Natural killer cell (primary cell): ENCODE measurements at regions of chr12 and their contacts with region 1.

Region 1: DNA sequence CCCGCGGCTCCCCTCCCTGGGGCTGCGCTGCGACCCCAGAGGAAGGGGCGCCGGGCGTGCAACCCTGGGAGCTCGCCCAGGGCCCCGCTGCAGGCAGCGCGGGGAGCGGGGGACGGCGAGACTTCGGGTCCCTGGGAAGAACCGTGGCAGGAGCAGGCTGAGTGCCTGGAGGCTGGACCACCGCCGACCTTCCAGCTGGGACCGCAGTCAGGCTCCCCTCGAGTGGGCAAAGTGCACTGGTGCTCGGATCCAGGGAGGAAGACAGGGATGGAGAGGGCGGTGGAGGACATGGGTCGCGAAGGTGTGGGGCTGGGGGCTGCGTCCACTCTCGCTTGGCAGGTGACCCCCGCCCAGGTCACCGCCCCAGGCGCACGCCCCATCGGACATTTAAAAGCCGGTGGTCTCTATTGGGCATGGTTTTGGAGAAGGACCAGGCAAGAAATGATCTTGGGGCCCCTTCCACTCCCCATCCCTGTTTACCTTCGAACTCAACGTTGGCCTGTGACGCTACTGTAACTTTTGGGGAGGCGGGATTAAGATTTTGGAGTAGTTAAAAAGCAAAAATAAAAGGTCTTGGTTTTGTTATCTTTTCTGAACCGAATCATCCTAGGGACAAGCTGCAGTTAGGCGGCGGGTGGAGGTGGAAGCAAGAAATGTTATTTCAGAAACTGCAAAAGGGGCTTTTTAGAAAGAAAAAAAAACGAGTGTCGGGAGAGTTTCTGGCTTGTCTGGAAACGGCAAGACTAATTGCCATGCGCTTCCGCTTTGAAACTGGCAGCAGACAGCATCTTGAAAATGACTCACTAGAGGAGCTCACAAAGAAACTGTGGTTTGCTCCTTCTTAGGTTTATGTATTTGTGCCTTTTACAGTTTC is 1.0 kb downstream of the ELK3 start:
- DNase-seq: peak; percentile 53 to 91
- ATAC-seq: peak; percentile 60 to 76 (median 71)
- H3K4me3 ChIP-seq: peak overlapping the region; percentile 78
- H3K4me3 Mint-ChIP-seq: peak overlapping the region; percentile 99
- H3K27ac ChIP-seq: peak overlapping the region; percentile 81
- H3K27ac Mint-ChIP-seq: peak overlapping the region; percentile 97
- H3K4me1 ChIP-seq: peaks cover 21% of the 10 kb centered on the region
- H3K4me1 Mint-ChIP-seq: peaks cover 30 to 41% of the 10 kb centered on the region in 2 donors
- H3K27me3 ChIP-seq: no peaks in the 10 kb centered on the region
- H3K27me3 Mint-ChIP-seq: no peaks in the 10 kb centered on the region
- CTCF ChIP-seq: no peak

Region 2: DNA sequence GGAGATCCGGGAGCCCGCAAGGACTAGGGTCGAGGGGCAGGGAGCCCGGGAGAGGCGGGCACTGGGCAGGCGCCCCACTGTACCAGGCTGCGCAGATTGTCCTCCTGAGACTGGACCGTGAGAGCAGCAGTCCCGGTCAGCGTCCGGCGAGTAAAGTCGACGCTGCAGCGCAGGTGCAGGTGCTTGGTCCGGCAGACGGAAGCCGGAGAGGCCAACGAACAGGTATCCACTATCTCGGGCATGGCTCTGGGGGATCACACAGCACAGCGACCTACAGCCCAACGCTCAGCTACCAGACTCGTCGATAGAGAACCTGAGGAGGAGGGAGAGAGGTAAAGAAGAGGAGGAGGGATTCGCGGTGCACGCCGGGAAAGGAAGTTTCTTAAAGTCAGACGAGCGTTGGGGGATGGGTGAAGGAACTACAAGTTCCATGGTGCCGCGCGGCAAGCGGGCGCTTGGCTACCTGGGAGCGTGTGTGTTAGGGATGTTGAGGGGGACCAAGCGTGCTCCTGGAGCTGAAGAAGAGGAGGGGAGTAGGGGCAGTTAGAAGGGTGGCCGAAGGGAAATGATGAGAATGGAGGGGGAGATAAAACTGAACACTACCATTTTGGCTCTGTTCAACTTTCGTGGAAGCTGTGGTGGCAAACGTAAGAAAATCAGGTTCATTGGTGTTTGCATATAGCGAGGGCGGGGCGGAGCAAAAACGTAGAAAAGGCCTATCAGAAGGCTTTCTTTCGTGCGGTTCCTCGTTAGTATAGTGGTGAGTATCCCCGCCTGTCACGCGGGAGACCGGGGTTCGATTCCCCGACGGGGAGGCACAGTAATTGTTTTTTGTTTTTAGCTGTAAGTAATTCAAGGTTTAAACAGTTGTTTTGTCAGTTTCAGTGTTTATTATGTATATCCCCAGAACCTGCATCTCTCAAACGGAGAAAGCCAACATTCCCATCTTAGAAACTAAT is 159.7 kb before region 1 on chr12 and contains the start of gene LTA4H:
- intact Hi-C with region 1: loop called (anchors 1 kb)
- DNase-seq: peak; percentile 93 to 99
- ATAC-seq: peak; percentile 94 to 99 (median 95)
- H3K4me3 ChIP-seq: peak within 1 kb of the TSS; percentile 97
- H3K4me3 Mint-ChIP-seq: no peak within 1 kb of the TSS
- H3K27ac ChIP-seq: peak within 1 kb of the TSS; percentile 78
- H3K27ac Mint-ChIP-seq: no peak within 1 kb of the TSS
- H3K4me1 ChIP-seq: peaks cover 8% of the 10 kb centered on the region
- H3K4me1 Mint-ChIP-seq: peaks cover 0 to 14% of the 10 kb centered on the region in 2 donors
- H3K27me3 ChIP-seq: no peaks in the 10 kb centered on the region
- H3K27me3 Mint-ChIP-seq: no peaks in the 10 kb centered on the region
- CTCF ChIP-seq: no peak
- total RNA-seq, gene LTA4H: 43.1 to 51.9 (median 48.3) TPM

Region 3: GRCh38 chr12:96141216-96141912 is 53.8 kb before region 1 on chr12:
- intact Hi-C with region 1: no loop called
- DNase-seq: no peak
- ATAC-seq: no peak
- H3K4me3 ChIP-seq: no peak overlapping the region
- H3K4me3 Mint-ChIP-seq: no peak overlapping the region
- H3K27ac ChIP-seq: no peak overlapping the region
- H3K27ac Mint-ChIP-seq: no peak overlapping the region
- H3K4me1 ChIP-seq: peaks cover 8% of the 10 kb centered on the region
- H3K4me1 Mint-ChIP-seq: peaks cover 16 to 17% of the 10 kb centered on the region in 2 donors
- H3K27me3 ChIP-seq: no peaks in the 10 kb centered on the region
- H3K27me3 Mint-ChIP-seq: peaks cover 4 to 6% of the 10 kb centered on the region in 2 donors
- CTCF ChIP-seq: no peak

Region 4: DNA sequence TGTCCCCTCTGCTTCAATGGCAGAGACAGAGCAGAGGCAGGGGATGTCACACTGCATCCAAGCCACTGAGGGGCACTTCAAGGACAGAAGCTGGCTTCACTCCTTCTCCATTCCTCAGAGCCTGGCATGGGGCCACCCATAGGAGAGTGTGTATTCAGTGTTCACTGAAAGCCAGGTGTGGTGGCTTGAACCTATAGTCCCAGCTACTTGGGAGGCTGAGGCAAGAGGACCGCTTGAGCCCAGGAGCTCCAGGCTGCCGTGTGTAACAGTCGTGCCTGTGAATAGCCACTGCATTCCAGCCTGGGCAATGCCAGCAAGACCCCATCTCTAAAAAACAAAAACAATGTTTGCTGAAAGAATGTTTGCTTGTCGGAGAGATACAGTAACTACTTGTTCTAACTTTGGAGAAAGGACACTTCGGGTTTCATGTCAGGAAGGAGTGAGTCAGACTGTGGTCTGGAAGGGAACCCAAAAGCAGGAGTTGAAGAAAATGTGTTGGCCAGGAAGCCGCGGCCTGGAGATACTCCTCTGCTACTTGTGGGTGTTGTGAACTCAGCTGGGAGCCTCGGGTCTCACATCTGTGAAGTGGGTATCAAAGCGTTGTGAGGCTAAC is 42.4 kb after region 1 on chr12:
- intact Hi-C with region 1: loop called (anchors 1 kb)
- DNase-seq: peak; percentile 60 to 79
- ATAC-seq: peak; percentile 34 to 54 (median 36)
- H3K4me3 ChIP-seq: no peak overlapping the region
- H3K4me3 Mint-ChIP-seq: peak overlapping the region; percentile 77
- H3K27ac ChIP-seq: peak overlapping the region; percentile 56
- H3K27ac Mint-ChIP-seq: peak overlapping the region; percentile 87 to 95
- H3K4me1 ChIP-seq: peaks cover 75% of the 10 kb centered on the region
- H3K4me1 Mint-ChIP-seq: peaks cover 75 to 82% of the 10 kb centered on the region in 2 donors
- H3K27me3 ChIP-seq: no peaks in the 10 kb centered on the region
- H3K27me3 Mint-ChIP-seq: no peaks in the 10 kb centered on the region
- CTCF ChIP-seq: no peak

Region 5: GRCh38 chr12:96368233-96368632 is 173.0 kb after region 1 on chr12:
- intact Hi-C with region 1: no loop called
- DNase-seq: no peak
- ATAC-seq: no peak
- H3K4me3 ChIP-seq: no peak overlapping the region
- H3K4me3 Mint-ChIP-seq: no peak overlapping the region
- H3K27ac ChIP-seq: no peak overlapping the region
- H3K27ac Mint-ChIP-seq: peak overlapping the region; percentile 38 to 61
- H3K4me1 ChIP-seq: peaks cover 15% of the 10 kb centered on the region
- H3K4me1 Mint-ChIP-seq: peaks cover 70 to 75% of the 10 kb centered on the region in 2 donors
- H3K27me3 ChIP-seq: no peaks in the 10 kb centered on the region
- H3K27me3 Mint-ChIP-seq: no peaks in the 10 kb centered on the region
- CTCF ChIP-seq: no peak